ENCODE measurements at regions of chr17 and their contacts with region 1.

Region 1: GRCh38 chr17:82716203-82717010 is at the start of gene FN3KRP:
- DNase-seq: peak; percentile 91
- H3K4me3 ChIP-seq: peak within 1 kb of the TSS; percentile 71 to 96 (median 74)
- H3K27ac ChIP-seq: no peak within 1 kb of the TSS
- H3K4me1 ChIP-seq: peaks cover 12% of the 10 kb centered on the region
- H3K27me3 ChIP-seq: no peaks in the 10 kb centered on the region
- CTCF ChIP-seq: no peak
- POLR2A ChIP-seq: peak; percentile 47
- total RNA-seq, gene FN3KRP: 32.7 and 35.2 TPM in 2 replicates

Region 2: DNA sequence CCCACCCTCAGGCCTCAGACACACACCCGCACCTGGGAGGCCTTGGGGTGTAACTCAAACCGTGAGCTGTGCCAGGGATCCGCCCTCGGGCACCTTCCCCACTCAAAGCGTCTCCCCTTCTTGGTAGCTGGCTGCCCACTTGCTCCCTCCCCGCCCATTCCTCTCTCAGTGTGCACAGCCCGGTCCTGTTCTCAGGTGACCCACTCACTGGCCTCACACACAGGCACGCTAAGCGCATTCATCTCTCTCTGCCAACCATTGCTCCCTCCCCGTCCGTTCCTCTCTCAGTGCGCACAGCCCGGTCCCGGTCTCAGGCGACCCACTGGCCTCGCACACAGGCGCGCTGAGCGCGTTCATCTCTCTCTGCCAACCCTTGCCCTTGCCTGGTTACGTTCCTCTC is 89.0 kb before region 1 on chr17:
- CTCF ChIA-PET with region 1: no interaction called
- POLR2A ChIA-PET with region 1: no interaction called
- dilution Hi-C with region 1: no loop called
- intact Hi-C with region 1: no loop called
- DNase-seq: no peak
- H3K4me3 ChIP-seq: no peak overlapping the region
- H3K27ac ChIP-seq: no peak overlapping the region
- H3K4me1 ChIP-seq: no peaks in the 10 kb centered on the region
- H3K27me3 ChIP-seq: no peaks in the 10 kb centered on the region
- CTCF ChIP-seq: no peak
- POLR2A ChIP-seq: no peak

Region 3: DNA sequence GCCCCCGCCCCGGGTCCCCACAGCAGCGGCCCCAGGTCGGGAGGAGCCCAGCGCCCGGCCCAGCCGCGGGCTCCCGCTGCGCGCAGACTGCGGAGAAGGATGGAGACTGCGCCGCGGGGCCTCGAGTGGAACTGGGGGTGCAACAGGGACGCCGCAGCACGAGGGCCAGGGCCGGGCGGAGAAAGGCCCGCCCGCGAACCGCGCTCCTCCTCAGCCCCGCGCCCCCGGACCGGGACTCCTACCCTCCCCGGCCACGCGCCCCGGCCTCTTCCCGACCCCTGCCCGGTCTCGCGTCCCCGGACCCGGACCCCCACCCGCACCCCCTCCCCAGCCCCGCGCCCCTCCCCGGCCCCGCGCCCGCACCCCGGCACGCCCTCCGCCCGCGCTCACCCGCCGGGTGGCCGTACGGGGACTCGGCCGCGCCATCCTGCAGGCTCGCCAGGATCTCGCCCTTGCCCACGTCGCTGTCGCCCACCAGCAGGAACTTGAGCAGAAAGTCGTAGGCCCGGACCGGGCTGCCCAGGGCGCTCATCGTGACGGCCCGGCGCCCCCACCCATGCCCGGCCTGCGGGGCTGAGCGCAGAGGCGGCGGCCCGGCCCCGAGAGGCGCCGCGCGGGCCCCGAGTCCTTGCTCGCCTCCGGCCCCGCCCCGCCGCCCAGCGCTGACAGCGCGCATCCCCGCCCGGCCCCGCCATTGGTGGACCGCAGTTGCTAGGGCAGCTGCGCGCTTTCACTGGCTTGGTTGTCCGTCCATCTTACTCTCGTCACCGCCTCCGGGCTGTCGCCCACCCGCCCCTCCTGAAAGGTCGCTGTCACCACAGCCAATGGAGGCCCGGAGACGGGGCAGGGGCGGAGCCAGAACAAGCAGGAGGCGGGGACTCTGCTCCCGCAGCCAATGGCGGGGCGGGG is 18.1 kb before region 1 on chr17 and contains the start of gene RAB40B:
- CTCF ChIA-PET with region 1: no interaction called
- POLR2A ChIA-PET with region 1: no interaction called
- dilution Hi-C with region 1: no loop called
- intact Hi-C with region 1: loop called (anchors 2 kb)
- DNase-seq: peak; percentile 99
- H3K4me3 ChIP-seq: peak within 1 kb of the TSS; percentile 45 to 52 (median 47)
- H3K27ac ChIP-seq: no peak within 1 kb of the TSS
- H3K4me1 ChIP-seq: peaks cover 5% of the 10 kb centered on the region
- H3K27me3 ChIP-seq: peaks cover 3 to 8% of the 10 kb centered on the region in 2 experiments
- CTCF ChIP-seq: no peak
- POLR2A ChIP-seq: no peak
- total RNA-seq, gene RAB40B: 5.5 TPM in 2 replicates

Region 4: GRCh38 chr17:82734987-82735866 is 18.8 kb after region 1 on chr17 and contains the start of gene FN3K:
- CTCF ChIA-PET with region 1: interaction called, 3 read pairs
- POLR2A ChIA-PET with region 1: no interaction called
- dilution Hi-C with region 1: no loop called
- intact Hi-C with region 1: loop called (anchors 1 kb)
- DNase-seq: peak; percentile 64
- H3K4me3 ChIP-seq: peak within 1 kb of the TSS; percentile 45 to 81 (median 47)
- H3K27ac ChIP-seq: no peak within 1 kb of the TSS
- H3K4me1 ChIP-seq: no peaks in the 10 kb centered on the region
- H3K27me3 ChIP-seq: no peaks in the 10 kb centered on the region
- CTCF ChIP-seq: no peak
- POLR2A ChIP-seq: peak; percentile 59
- total RNA-seq, gene FN3K: 8.3 and 12.0 TPM in 2 replicates

Region 5: DNA sequence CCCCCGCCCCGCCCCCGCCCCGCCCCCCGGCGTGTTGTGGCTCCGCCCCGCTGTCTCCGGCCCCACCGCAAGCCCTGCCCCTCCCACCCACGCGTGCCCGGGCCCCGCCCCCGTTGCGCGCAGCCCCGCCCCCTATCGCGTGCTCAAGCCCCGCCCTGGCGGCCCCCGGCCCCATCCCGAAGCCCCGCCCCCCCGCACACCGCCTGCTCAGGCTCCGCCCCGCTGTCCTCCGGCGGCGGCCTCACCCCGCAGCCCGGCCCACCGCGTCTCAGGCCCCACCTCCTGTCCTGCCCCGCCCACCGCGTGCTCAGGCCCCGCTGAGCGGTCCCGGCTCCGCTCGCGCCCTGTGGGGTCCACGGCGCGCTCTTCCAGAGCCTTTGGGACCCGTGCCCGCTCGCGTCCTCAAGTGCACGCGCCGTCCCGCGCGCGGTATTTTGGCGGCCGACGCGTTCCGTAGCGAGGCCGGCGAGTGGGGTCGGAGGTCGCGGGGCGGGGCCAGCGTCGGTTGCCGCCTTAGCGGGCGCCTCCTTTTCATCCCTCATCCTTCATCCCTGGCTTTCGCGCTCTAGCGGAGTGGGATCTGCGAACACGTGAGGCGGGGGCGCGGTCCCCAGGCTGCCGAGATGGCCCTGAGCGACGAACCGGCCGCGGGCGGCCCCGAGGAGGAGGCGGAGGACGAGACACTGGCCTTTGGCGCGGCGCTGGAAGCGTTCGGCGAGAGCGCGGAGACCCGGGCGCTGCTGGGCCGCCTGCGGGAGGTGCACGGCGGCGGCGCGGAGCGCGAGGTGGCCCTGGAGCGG is 35.4 kb after region 1 on chr17 and contains the start of gene TBCD:
- CTCF ChIA-PET with region 1: no interaction called
- POLR2A ChIA-PET with region 1: no interaction called
- dilution Hi-C with region 1: no loop called
- intact Hi-C with region 1: loop called (anchors 2 kb)
- DNase-seq: peak; percentile 90
- H3K4me3 ChIP-seq: peak within 1 kb of the TSS; percentile 67 to 84 (median 83)
- H3K27ac ChIP-seq: peak within 1 kb of the TSS; percentile 0
- H3K4me1 ChIP-seq: peaks cover 5% of the 10 kb centered on the region
- H3K27me3 ChIP-seq: no peaks in the 10 kb centered on the region
- CTCF ChIP-seq: no peak
- POLR2A ChIP-seq: no peak
- total RNA-seq, gene TBCD: 145 and 163 TPM in 2 replicates

Region 6: DNA sequence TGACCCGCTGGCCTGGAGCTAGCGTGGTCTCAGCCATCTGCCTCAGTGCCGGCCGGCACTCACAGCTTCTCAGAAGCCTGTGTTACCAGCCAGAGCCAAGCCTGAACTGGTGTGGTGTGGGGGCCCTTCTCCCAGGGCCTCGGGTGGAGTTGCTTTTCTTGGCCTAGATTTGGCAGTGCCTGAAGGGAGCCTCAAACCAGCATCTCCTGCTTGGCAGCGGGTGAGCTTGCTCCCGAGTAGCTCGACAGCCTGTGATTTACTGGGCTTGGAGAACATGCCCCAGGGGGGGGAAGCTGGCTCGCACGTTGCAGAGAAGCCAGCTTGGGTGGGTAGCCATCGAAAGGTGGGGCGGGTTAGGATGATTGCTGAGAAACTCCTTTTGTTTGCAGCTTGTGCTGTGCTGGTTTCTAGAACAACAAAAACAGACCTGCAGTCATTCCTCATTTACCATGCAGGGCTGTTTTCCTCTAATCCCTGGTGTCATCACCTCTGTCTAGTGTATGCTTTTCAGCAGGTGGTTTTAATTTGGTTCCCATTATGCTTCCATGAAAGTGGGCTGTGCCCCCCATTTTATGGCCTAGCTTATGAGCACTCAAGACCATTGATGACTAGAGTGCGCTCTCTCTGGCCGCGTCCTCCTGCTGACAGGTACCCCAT is 77.7 kb after region 1 on chr17:
- CTCF ChIA-PET with region 1: no interaction called
- POLR2A ChIA-PET with region 1: no interaction called
- dilution Hi-C with region 1: no loop called
- intact Hi-C with region 1: no loop called
- DNase-seq: no peak
- H3K4me3 ChIP-seq: no peak overlapping the region
- H3K27ac ChIP-seq: no peak overlapping the region
- H3K4me1 ChIP-seq: no peaks in the 10 kb centered on the region
- H3K27me3 ChIP-seq: no peaks in the 10 kb centered on the region
- CTCF ChIP-seq: no peak
- POLR2A ChIP-seq: no peak